Colonic mucosa (tissue), 4 donors: ENCODE measurements at regions of chr12 and their contacts with region 1.

Region 1: DNA sequence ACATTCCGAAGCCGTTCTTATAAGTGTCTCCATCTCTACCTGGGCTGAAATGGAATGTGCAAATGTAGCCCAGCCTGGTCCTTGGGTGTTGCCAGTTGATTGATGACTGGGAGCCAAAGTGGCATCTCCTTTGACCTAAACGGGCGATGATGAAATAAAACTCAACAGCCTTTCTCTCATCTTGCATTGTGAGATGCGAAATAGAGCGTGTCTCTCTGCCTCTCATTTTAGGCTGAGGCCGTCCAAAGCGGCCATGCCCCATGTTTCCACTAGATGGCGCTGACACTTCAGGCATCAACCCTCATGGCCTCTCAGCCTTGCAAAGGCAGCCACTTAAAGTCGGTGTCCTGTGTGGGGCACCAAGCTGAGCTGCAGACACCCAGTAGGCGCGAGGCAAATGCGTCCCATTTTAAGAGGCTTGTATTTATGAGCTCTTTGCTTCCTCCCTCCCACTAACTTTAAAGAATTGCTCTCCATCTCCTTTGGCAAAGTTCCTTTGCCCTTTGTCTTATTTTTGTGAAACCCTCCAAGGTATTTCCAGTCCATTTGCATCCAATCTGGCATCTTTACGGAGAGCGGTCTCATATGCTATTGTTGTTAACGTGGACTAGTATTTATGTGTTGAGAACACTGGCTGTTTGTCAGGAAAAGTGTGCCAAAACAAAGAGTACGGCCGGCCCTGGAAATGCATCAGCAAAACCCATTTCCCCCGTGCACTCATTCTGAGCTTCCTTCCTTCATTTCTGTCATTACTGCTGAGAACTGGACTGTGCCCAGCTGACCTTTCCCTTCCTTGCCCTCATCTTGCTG is 25.0 kb downstream of the GPRC5A start:
- DNase-seq: peak; percentile 89
- H3K4me3 ChIP-seq: no peak overlapping the region
- H3K27ac ChIP-seq: no peak overlapping the region
- H3K4me1 ChIP-seq: no peaks in the 10 kb centered on the region
- H3K27me3 ChIP-seq: no peaks in the 10 kb centered on the region
- CTCF ChIP-seq: peak; percentile 98

Region 2: GRCh38 chr12:12661086-12661485 is 255.3 kb before region 1 on chr12:
- intact Hi-C with region 1: no loop called
- DNase-seq: no peak
- H3K4me3 ChIP-seq: no peak overlapping the region
- H3K27ac ChIP-seq: no peak overlapping the region
- H3K4me1 ChIP-seq: no peaks in the 10 kb centered on the region
- H3K27me3 ChIP-seq: no peaks in the 10 kb centered on the region
- CTCF ChIP-seq: no peak

Region 3: GRCh38 chr12:13061421-13062128 is 145.2 kb after region 1 on chr12:
- intact Hi-C with region 1: no loop called
- DNase-seq: no peak
- H3K4me3 ChIP-seq: no peak overlapping the region
- H3K27ac ChIP-seq: no peak overlapping the region
- H3K4me1 ChIP-seq: no peaks in the 10 kb centered on the region
- H3K27me3 ChIP-seq: no peaks in the 10 kb centered on the region
- CTCF ChIP-seq: no peak

Region 4: GRCh38 chr12:13211859-13212664 is 295.7 kb after region 1 on chr12:
- intact Hi-C with region 1: loop called (anchors 5 kb)
- DNase-seq: peak; percentile 76
- H3K4me3 ChIP-seq: no peak overlapping the region
- H3K27ac ChIP-seq: no peak overlapping the region
- H3K4me1 ChIP-seq: no peaks in the 10 kb centered on the region
- H3K27me3 ChIP-seq: no peaks in the 10 kb centered on the region
- CTCF ChIP-seq: peak; percentile 73